ENCODE measurements at regions of chr2 and their contacts with region 1.

Region 1: GRCh38 chr2:234483568-234484251 is 13.2 kb downstream of the ARL4C start:
- DNase-seq: peak; percentile 50 to 88 (median 80)
- ATAC-seq: peak; percentile 89
- H3K4me3 ChIP-seq: peak overlapping the region; percentile 28
- H3K4me3 Mint-ChIP-seq: peak overlapping the region; percentile 60 to 81 (median 67)
- H3K27ac ChIP-seq: peak overlapping the region; percentile 94
- H3K27ac Mint-ChIP-seq: peak overlapping the region; percentile 87 to 99 (median 95)
- H3K4me1 ChIP-seq: peaks cover 63 to 72% of the 10 kb centered on the region in 2 donors
- H3K4me1 Mint-ChIP-seq: peaks cover 44 to 95% (median 84%) of the 10 kb centered on the region in 7 donors
- H3K27me3 ChIP-seq: no peaks in the 10 kb centered on the region
- H3K27me3 Mint-ChIP-seq: no peaks in the 10 kb centered on the region

Region 2: GRCh38 chr2:232576995-232577394 is 1906.7 kb before region 1 on chr2:
- CTCF ChIA-PET with region 1: no interaction called
- POLR2A ChIA-PET with region 1: no interaction called
- intact Hi-C with region 1: no loop called
- DNase-seq: no peak
- ATAC-seq: no peak
- H3K4me3 ChIP-seq: no peak overlapping the region
- H3K4me3 Mint-ChIP-seq: no peak overlapping the region
- H3K27ac ChIP-seq: no peak overlapping the region
- H3K27ac Mint-ChIP-seq: no peak overlapping the region
- H3K4me1 ChIP-seq: no peaks in the 10 kb centered on the region
- H3K4me1 Mint-ChIP-seq: peaks cover 0 to 15% (median 0%) of the 10 kb centered on the region in 7 donors
- H3K27me3 ChIP-seq: no peaks in the 10 kb centered on the region
- H3K27me3 Mint-ChIP-seq: no peaks in the 10 kb centered on the region

Region 3: GRCh38 chr2:234324116-234324515 is 159.6 kb before region 1 on chr2:
- CTCF ChIA-PET with region 1: no interaction called
- POLR2A ChIA-PET with region 1: no interaction called
- intact Hi-C with region 1: loop called in 1 of 2 experiments (anchors 1 kb)
- DNase-seq: no peak
- ATAC-seq: no peak
- H3K4me3 ChIP-seq: no peak overlapping the region
- H3K4me3 Mint-ChIP-seq: peak overlapping the region in 4 of 10 donors; percentile 5 to 52 (median 28)
- H3K27ac ChIP-seq: no peak overlapping the region
- H3K27ac Mint-ChIP-seq: peak overlapping the region; percentile 81 to 98 (median 89)
- H3K4me1 ChIP-seq: peaks cover 15 to 23% of the 10 kb centered on the region in 2 donors
- H3K4me1 Mint-ChIP-seq: peaks cover 21 to 76% (median 56%) of the 10 kb centered on the region in 7 donors
- H3K27me3 ChIP-seq: no peaks in the 10 kb centered on the region
- H3K27me3 Mint-ChIP-seq: no peaks in the 10 kb centered on the region

Region 4: DNA sequence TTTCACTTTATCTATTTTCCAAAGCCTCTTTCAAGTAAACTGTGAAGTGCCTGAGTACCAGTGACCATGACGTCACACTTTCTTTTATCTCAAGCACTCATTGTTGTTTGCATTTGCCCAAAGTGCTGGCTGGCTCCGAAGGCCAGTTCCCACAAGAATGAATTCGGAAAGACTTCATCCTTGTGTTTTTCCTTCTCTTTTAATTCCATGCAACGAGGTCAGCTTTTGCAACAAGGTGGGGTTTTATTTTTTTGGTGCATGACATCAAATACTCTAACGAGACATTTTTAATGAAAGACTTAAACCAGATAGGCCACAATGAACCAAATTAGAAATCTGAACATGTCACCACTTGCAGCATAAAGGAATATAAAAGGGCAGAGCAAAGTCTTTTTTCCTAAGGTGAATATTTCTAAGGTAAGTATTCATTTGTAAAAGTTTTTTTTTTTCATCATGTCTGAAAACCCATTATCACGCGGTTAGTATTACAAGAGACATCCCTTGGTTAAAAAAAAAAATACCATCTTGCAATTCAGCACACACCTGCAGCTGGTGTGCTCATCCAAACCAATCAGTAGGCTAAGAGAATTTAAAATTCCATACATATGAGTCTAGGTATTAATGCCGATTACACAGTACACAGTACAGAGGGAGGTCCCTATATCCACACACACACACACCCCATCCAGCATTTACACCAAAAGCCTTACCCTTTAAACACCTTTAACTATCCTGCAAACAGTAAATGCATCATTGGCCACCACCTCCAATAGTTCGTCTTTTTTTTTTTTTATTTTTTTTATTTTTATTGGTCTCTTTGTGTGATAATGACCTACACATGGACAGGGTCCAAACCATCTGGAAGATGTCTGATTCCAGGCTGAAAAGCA is 10.9 kb after region 1 on chr2:
- CTCF ChIA-PET with region 1: no interaction called
- POLR2A ChIA-PET with region 1: interaction called, 30 read pairs
- intact Hi-C with region 1: loop called (anchors 1 kb)
- DNase-seq: peak in 7 of 9 donors; percentile 51 to 67 (median 57)
- ATAC-seq: peak; percentile 14
- H3K4me3 ChIP-seq: peak overlapping the region; percentile 95
- H3K4me3 Mint-ChIP-seq: peak overlapping the region; percentile 96 to 100 (median 98)
- H3K27ac ChIP-seq: peak overlapping the region; percentile 94
- H3K27ac Mint-ChIP-seq: peak overlapping the region; percentile 91 to 100 (median 98)
- H3K4me1 ChIP-seq: peaks cover 34 to 46% of the 10 kb centered on the region in 2 donors
- H3K4me1 Mint-ChIP-seq: peaks cover 26 to 50% (median 43%) of the 10 kb centered on the region in 7 donors
- H3K27me3 ChIP-seq: no peaks in the 10 kb centered on the region
- H3K27me3 Mint-ChIP-seq: peaks cover 0 to 5% (median 0%) of the 10 kb centered on the region in 5 donors

Region 5: DNA sequence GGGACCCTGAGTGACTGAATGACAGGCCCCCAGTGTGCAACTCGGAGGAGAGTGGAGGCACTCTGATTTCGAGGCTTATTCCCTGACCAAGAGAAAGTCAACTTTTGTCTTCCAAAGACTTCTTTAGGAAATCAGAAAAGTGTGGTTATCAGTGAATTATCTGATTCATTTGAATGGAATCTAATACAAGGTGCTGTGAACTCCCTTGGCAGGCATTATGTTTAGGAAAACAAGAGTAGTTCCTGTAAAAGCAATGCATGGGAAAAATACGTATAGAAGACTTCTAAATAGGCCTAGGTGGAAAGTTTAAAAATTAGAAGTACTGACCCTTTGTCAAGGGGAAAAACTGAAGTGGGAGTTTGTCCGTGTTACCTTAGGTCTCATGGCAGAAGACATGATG is 1415.1 kb after region 1 on chr2:
- CTCF ChIA-PET with region 1: no interaction called
- POLR2A ChIA-PET with region 1: no interaction called
- intact Hi-C with region 1: no loop called
- DNase-seq: no peak
- ATAC-seq: no peak
- H3K4me3 ChIP-seq: no peak overlapping the region
- H3K4me3 Mint-ChIP-seq: no peak overlapping the region
- H3K27ac ChIP-seq: no peak overlapping the region
- H3K27ac Mint-ChIP-seq: no peak overlapping the region
- H3K4me1 ChIP-seq: no peaks in the 10 kb centered on the region
- H3K4me1 Mint-ChIP-seq: no peaks in the 10 kb centered on the region
- H3K27me3 ChIP-seq: no peaks in the 10 kb centered on the region
- H3K27me3 Mint-ChIP-seq: peaks cover 0 to 12% (median 9%) of the 10 kb centered on the region in 5 donors

Measured in naive thymus-derived CD4-positive, alpha-beta T cell (primary cell).